GM10248 (cell line): ENCODE measurements at regions of chr16 and their contacts with region 1.

Region 1: DNA sequence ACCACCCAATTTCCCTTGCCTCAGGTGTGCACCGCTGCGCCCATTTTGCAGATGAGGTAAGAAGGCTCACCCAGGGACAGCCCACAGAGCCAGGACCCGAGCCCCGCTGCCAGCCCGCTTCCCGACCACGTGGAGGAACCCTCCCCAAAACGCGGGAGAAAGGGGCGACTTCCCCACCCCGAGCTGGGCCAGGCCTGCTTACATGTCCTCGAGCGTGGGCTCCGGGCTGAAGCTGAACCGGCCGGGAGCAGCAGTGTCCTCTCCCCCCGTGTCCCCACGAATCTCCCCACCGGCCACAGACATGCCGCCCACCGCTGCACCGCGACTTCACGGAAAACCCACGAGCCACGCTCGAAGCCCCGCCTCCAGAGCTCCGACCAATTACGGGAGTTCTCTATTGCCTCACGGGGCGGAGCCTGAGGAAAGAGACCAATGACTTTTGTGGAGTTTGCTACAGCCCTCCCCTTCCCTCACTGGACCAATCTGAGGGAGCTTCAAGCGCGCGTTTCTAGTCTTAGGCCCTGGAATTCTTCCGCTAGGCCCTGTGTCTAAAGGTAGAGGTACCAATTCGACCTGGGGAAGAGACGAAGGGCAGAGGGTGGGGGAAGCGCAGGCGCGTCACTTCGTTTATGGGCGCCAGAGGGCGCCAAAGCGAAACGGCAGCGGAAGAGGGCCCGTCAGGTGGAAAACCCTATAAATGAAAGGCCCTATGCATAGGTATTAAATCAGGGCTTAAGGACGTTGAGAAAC is at the start of gene DCTPP1:
- DNase-seq: peak; percentile 95
- CTCF ChIP-seq: peak; percentile 90

Region 2: DNA sequence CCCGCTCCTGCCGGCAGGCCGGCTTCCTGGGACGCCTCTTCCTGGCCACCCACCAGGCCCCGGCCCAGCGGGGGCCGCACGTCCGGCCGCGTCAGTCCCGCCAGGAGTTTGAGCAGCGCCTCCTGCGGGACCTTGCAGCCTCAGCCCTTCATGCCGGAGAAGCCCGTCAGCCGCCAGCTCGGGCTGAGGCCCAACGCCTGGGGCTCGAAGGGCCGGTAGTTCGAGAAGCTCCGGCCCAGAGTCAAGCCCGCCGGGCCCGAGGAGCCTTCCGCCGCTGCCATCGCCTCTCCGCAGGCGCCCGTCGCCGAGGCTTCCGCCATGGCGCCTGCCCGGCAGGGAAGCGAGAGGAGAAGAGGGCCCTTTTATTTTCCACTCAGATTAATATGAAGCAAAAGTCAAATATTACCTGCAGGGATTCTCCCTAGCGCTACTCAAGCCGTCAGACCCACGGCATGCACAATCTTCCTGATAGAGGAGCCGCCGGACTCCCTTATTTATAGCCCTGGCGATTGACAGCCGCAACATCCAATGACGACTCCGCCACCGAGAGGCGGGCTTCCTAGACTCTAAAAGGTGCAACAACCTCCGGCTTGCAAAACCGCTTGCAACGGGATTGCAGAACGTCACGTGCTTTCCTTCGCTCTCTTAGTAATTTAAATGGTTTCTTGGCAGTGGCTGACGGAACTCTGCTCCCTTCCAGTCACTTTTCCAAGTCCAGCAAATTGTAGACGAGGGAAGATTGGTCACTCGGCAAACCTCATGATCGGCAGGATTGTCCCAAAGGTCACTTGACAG is 15.8 kb after region 1 on chr16 and contains the start of gene SEPHS2:
- CTCF ChIA-PET with region 1: interaction called, 73 read pairs
- POLR2A ChIA-PET with region 1: interaction called, 4 read pairs
- DNase-seq: peak; percentile 94
- CTCF ChIP-seq: peak; percentile 59

Region 3: DNA sequence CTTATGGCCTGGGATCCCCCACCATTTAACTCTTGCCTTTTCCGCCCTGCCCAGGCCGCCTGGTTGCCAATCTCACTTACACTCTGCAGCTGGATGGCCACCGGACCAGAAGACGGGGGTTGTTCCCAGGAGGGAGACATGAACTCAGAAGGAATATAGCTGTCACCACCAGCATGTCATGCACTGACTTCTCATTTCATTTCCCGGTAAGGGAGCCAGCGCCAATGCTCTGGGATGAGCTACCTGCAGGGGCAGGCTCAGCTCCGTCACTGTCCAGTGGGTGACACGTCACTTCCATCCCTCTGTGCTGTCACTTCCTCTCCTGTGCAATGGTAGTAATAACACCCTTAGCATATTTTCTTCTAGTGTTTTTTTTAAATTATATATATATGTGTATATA is 69.4 kb after region 1 on chr16:
- CTCF ChIA-PET with region 1: interaction called, 13 read pairs
- POLR2A ChIA-PET with region 1: no interaction called
- DNase-seq: no peak
- CTCF ChIP-seq: no peak

Region 4: GRCh38 chr16:30567991-30568638 is 138.3 kb after region 1 on chr16:
- CTCF ChIA-PET with region 1: interaction called, 17 read pairs
- POLR2A ChIA-PET with region 1: interaction called, 3 read pairs
- DNase-seq: peak; percentile 62
- CTCF ChIP-seq: no peak

Region 5: DNA sequence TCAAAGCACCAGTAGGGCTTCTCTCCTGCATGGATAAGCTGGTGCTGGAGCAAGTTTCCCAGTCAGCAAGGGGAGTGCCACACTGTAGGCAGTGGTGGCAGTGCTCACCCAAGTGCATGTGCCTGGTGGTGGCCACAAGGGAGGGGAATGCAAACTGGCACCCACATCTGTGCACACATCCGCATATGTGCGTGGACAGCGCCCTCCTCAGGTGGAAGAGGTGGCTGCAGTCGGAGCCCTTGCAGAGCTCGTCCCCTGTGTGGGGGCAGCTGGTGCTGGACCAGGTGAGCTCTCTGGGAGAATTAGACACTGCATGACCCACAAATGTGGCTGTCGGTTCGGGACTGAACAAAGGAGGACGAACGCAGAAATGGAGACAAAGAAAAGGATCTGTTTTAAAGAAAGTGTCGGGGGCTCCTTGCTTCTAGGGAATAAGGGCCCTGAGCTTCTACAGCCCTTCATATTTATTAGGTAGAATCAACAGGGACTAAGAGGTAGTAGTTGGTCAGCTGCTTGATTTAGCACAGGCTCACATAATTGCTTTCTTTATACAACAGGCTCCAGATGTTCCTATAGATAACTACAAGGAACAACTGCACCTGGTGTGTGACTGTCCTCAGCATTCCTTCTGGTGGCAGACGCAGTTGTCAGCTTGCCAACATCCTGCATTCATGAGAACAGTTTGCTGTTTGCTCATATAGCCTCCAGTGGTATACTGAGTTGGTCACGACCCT is 185.7 kb after region 1 on chr16:
- CTCF ChIA-PET with region 1: interaction called, 24 read pairs
- POLR2A ChIA-PET with region 1: interaction called, 5 read pairs
- DNase-seq: peak; percentile 50
- CTCF ChIP-seq: peak; percentile 74

Region 6: GRCh38 chr16:30637942-30638341 is 208.1 kb after region 1 on chr16:
- CTCF ChIA-PET with region 1: interaction called, 28 read pairs
- POLR2A ChIA-PET with region 1: no interaction called
- DNase-seq: no peak
- CTCF ChIP-seq: peak; percentile 41

Region 7: GRCh38 chr16:30820952-30821760 is 391.3 kb after region 1 on chr16:
- CTCF ChIA-PET with region 1: no interaction called
- POLR2A ChIA-PET with region 1: no interaction called
- DNase-seq: no peak
- CTCF ChIP-seq: no peak